ENCODE measurements at regions of chr18 and their contacts with region 1.

Region 1: DNA sequence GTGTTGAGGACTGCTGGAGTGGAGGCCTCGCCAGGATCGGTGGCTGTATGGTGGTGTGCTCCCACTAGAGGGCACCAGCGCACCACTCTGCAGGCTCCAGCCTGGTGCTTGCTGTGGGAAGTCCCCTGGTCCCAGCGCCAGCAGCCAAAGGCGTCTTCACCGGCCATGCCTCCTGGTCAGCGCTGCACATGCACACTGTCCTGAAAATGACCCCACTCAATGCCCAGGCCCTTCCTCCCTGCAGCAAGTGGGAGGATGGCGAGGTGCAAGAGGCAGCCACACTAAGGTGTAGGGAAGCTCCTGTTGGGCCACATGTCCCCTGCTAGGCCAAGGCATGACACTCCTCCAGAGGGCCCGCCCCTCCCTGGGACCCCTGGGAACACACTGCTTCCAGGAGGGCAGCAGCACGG is 136.5 kb downstream of the CTIF start:
- DNase-seq: peak; percentile 74 to 98 (median 92)

Region 2: GRCh38 chr18:48419277-48420022 is 255.9 kb before region 1 on chr18:
- intact Hi-C with region 1: no loop called
- DNase-seq: no peak

Region 3: DNA sequence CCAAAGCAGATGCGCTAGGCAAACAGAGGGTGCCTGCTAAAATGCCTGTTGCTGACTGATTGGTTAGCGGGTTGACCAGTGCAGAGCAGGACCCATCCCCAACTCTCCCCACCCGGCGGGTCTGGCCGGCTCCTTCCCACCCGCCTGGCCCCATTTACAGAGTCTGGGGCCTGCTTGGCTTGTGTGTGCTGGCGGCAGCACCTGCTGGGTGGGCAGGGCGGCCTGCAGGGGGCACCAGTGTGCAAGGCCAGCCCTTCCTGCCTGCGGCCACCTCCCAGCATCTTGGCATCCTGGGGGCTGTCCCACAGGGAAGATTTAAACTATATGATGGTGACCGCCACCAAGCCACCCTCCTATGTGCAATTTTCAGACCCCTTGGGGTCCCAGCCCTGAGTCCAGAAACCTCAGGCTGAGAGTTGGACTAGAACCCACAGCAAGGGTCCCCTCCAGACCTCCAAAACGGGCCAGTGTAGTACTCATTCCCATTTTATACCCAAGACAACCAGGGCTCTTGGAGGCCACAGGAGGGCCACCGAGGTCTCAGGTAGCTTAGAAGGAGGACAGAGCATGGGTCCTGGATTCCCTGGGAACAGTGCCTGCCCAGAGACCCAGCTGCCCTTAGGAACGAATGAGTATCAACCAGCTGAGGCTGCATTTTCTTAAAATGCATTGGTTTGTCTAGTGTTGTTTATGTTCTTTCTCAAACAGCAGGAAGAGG is 101.8 kb after region 1 on chr18:
- intact Hi-C with region 1: loop called (anchors 5 kb)
- DNase-seq: peak in 8 of 10 donors; percentile 55 to 95 (median 71)

Region 4: DNA sequence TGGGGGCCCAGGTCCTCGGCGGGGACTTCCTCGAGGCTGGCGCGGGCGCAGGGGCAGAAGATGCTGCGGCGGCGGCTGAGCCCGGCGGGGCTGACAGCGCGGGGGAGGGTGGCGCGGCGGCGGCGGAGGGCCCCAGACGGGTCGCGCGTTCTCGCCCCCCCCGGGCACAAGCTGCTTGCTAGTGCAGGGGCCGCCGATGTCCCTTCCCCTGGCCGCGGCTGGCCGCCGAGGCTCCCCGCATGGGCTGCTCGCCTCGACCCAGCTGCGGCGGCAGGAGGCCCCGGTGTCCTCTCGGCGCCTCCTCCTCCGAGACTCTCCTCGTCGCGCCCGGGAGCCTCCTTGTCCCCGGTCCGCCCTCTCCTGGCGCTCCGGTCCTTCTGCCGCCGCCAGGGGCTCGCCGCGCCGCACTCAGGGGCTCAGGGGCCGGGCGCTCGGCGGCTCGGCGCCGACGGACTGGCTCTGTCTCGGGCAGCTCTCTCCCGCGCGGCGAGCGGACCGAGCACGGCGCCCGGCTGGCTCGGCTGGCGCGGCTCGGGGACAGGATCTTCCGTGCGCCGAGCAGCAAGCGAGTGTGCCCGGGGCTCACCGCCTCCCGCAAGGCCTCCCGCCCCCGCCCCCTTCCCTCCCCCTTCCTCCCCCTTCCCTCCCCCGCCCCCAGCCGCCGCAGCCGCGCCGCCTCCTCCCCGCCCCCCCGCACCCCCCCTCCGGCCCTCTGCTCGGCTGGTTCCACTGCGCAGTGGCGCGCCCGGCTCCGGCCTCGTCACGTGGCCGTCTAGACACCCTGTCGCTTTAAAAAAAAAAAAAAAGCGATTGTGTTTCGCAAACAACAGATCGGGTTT is 276.3 kb after region 1 on chr18:
- intact Hi-C with region 1: loop called (anchors 1 kb)
- DNase-seq: peak; percentile 63 to 97 (median 81)

Region 5: DNA sequence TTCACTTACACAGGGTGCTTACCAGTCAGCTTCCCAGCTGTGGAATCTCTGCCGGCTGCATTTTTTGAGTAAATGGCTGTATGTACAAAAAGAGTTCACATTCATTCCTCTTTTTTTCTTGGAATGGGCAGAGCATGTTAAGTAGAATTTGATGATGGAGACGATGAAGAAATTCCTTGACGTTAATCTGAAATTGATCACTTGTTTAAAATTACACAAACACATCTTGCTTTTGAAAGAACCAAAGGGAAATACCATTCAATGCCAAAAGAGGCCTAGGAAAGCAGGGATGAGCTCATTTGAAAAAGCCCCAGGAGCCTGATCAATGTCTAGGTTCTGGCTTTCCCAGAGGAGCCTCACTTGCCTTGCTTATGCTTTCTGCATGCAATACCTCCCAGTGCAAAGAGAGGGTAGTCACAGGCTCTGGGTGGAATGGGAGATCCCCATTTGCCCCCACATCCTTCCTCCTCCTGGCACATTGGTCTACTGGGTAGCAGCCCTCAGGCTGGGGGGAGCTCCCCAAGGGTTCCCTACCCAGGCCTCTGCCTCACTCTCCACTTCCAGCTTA is 287.7 kb after region 1 on chr18:
- intact Hi-C with region 1: no loop called
- DNase-seq: no peak

Region 6: DNA sequence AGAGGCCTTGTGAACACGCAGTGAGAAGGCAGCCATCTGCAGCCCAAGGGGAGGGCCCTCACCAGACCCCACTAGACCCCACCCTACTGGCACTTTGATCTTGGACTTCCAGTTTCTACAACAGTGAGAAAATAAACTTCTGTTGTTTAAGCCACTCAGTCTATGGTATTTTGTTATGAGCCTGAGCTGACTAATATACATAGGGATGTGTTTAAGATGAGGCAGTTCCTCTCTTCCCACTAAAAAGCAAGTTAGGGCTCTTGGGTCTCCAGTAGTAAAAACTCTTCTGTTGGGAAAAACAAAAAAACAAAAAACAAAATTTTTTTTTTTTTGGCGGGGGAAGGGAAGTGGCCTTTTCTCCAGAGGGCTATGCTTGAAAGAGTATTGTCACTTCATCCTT is 508.6 kb after region 1 on chr18:
- intact Hi-C with region 1: loop called (anchors 5 kb)
- DNase-seq: peak in 1 of 10 donors; percentile 55

Region 7: DNA sequence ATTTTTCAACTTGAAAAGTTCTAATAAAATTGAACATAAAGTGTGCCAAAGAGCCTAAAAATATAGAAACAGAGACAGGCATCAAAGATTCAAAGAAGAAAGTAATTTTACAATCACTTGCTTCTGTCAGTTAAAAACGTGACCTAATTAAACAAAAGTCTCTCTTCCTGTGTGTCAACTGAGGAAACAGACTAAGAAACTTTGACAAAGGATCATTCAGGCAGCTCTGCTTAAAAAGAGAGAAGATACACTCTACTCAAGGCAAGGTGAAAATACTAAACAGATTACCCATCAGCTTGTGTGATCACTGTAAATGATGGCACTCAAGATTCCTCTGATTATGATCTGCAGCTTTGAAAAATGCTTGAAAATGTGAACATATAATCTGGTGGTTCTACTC is 737.3 kb after region 1 on chr18:
- intact Hi-C with region 1: loop called (anchors 2 kb)
- DNase-seq: no peak